ENCODE measurements at regions of chr13 and their contacts with region 1.

Region 1: GRCh38 chr13:85729296-85729695 is 69.9 kb downstream of the SLITRK6 start:
- DNase-seq: peak; percentile 48
- ATAC-seq: no peak
- H3K4me3 ChIP-seq: no peak overlapping the region
- H3K27ac ChIP-seq: no peak overlapping the region; the same call in 1 of the 2 replicates
- H3K4me1 ChIP-seq: peaks cover 27% of the 10 kb centered on the region
- H3K27me3 ChIP-seq: no peaks in the 10 kb centered on the region
- CTCF ChIP-seq: no peak

Region 2: GRCh38 chr13:84925443-84925842 is 803.9 kb before region 1 on chr13:
- CTCF ChIA-PET with region 1: no interaction called
- POLR2A ChIA-PET with region 1: no interaction called
- intact Hi-C with region 1: loop called (anchors 10 kb)
- DNase-seq: peak; percentile 73
- ATAC-seq: peak; percentile 94
- H3K4me3 ChIP-seq: no peak overlapping the region
- H3K27ac ChIP-seq: 0 out of 2 replicates have a peak overlapping the region, but pooled peaks have one; percentile 10
- H3K4me1 ChIP-seq: peaks cover 13% of the 10 kb centered on the region
- H3K27me3 ChIP-seq: no peaks in the 10 kb centered on the region
- CTCF ChIP-seq: no peak

Region 3: DNA sequence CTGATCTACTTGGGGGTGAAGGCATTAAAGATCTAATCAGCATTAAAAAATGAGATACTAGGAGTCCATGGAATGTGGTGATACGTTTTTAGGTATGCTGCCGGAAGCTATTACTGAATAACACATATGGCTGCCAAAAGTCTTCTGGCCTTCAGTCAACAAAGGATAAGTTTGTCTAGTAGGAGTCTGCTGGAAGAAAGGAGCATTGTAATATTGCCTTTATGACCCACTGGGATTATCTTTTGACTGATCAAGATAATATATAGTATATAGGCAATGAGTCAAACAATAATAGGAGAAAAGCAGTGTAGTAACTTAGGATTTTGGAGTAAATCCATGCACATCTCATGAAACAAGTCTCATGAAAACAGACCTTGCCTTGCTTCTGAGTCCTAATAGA is 225.5 kb before region 1 on chr13:
- CTCF ChIA-PET with region 1: no interaction called
- POLR2A ChIA-PET with region 1: no interaction called
- intact Hi-C with region 1: loop called (anchors 5 kb)
- DNase-seq: peak; percentile 92
- ATAC-seq: peak; percentile 82
- H3K4me3 ChIP-seq: no peak overlapping the region
- H3K27ac ChIP-seq: peak overlapping the region; percentile 74
- H3K4me1 ChIP-seq: peaks cover 55% of the 10 kb centered on the region
- H3K27me3 ChIP-seq: no peaks in the 10 kb centered on the region
- CTCF ChIP-seq: no peak

Region 4: GRCh38 chr13:85709072-85709471 is 20.2 kb before region 1 on chr13:
- CTCF ChIA-PET with region 1: no interaction called
- POLR2A ChIA-PET with region 1: no interaction called
- intact Hi-C with region 1: loop called (anchors 1 kb)
- DNase-seq: peak; percentile 21
- ATAC-seq: peak; percentile 61; the same call in 1 of the 2 replicates
- H3K4me3 ChIP-seq: peak overlapping the region; percentile 9; the same call in 1 of the 2 replicates
- H3K27ac ChIP-seq: peak overlapping the region; percentile 41; the same call in 1 of the 2 replicates
- H3K4me1 ChIP-seq: peaks cover 14% of the 10 kb centered on the region
- H3K27me3 ChIP-seq: no peaks in the 10 kb centered on the region
- CTCF ChIP-seq: no peak

Region 5: DNA sequence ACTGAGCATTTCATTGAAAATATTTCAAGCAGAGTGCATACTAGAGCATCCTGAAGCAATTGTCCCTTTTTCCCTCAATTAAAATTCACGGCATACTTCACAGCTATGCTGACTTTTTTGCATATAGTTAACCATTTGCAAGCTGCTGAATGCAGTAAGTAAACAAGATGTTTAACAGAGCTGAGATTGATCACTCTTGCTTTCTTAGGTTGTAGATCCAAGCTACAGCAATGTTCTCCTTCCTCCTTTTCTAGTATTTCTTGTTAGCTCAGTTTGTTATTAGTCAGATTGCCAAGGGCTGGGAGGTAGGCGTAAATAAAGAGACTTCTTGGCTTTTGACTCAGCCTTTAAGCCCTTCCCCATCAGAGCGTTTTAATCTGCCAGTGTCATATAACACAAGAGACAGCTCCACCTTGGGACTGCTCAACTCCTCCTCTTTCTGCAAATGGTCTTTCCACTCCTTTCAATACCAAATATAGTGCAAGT is 69.8 kb after region 1 on chr13 and contains the start of gene SLITRK6:
- CTCF ChIA-PET with region 1: no interaction called
- POLR2A ChIA-PET with region 1: no interaction called
- intact Hi-C with region 1: loop called (anchors 2 kb)
- DNase-seq: peak; percentile 93
- ATAC-seq: peak; percentile 100
- H3K4me3 ChIP-seq: peak within 1 kb of the TSS; percentile 71
- H3K27ac ChIP-seq: peak within 1 kb of the TSS; percentile 46
- H3K4me1 ChIP-seq: peaks cover 15% of the 10 kb centered on the region
- H3K27me3 ChIP-seq: no peaks in the 10 kb centered on the region
- CTCF ChIP-seq: peak; percentile 50
- total RNA-seq, gene SLITRK6: 4.1 and 4.6 TPM in 2 replicates

Region 6: DNA sequence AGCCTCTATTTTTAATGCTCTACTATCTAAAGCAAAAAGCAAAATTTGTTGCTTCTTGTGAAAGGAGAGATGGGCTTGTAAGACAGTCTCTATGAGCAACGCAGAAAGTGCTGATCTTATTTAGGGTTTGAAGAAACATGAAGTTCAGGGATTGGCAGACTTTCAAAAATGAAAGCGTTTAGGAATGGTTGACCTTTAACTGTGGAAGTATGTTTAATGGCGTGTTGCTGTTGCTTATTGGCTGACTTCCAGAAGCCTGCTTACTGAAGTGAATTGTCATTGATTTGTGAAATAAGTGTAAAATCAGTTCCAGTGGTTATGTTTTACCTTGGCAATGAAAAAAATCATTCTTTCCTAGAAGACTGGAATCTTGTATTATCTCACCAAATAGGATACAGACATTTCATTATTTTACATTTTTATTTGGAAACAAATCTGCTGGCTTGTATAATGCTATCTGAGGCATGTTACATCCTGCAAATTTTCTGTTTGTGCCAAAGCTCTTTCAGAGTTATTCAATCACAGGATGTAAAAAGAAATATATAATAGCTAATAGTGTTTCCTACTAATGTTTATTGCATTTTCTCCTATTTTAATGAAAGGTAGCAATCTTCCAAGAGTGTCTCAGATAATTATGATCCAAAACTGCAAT is 291.2 kb after region 1 on chr13:
- CTCF ChIA-PET with region 1: no interaction called
- POLR2A ChIA-PET with region 1: no interaction called
- intact Hi-C with region 1: no loop called
- DNase-seq: peak; percentile 25
- ATAC-seq: no peak
- H3K4me3 ChIP-seq: no peak overlapping the region
- H3K27ac ChIP-seq: no peak overlapping the region
- H3K4me1 ChIP-seq: no peaks in the 10 kb centered on the region
- H3K27me3 ChIP-seq: no peaks in the 10 kb centered on the region
- CTCF ChIP-seq: no peak

Measured in PC-3 (cell line).